ENCODE measurements at regions of chr17 and their contacts with region 1.

Region 1: GRCh38 chr17:5226940-5227878 is 7.5 kb downstream of the SCIMP start:
- DNase-seq: peak; percentile 92
- ATAC-seq: peak; percentile 67
- H3K4me3 ChIP-seq: peak overlapping the region; percentile 68
- H3K27ac ChIP-seq: peak overlapping the region; percentile 100
- H3K4me1 ChIP-seq: peaks cover 76% of the 10 kb centered on the region
- H3K27me3 ChIP-seq: no peaks in the 10 kb centered on the region
- CTCF ChIP-seq: no peak
- EP300 ChIP-seq: peak; percentile 83 to 86
- POLR2A ChIP-seq: peak; percentile 70
- RAD21 ChIP-seq: no peak

Region 2: DNA sequence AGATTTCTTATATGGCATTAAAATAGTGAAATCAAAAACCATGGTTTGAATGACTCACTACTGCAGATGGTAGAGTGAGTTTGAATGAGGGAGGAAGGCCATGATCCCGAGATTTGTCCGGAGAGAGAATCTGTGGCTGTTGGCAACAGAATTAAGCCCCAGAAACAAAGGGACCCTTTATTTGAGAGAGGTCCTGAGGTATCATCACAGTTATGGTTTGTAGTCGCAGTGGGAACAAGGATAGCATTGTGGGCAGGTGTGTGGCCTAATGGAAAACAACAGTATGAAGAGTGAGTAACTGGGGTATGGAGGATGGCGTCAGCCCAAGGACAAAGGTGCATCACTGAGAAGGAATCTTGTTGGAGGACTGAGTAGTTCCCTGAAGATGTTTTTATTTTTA is 157.5 kb before region 1 on chr17:
- CTCF ChIA-PET with region 1: no interaction called
- POLR2A ChIA-PET with region 1: no interaction called
- RAD21 ChIA-PET with region 1: no interaction called
- SMC1A ChIA-PET with region 1: no interaction called
- in situ Hi-C with region 1: no loop called
- intact Hi-C with region 1: no loop called
- DNase-seq: no peak
- ATAC-seq: no peak
- H3K4me3 ChIP-seq: no peak overlapping the region
- H3K27ac ChIP-seq: no peak overlapping the region
- H3K4me1 ChIP-seq: no peaks in the 10 kb centered on the region
- H3K27me3 ChIP-seq: no peaks in the 10 kb centered on the region; a peak in 1 of 4 replicates
- CTCF ChIP-seq: no peak
- EP300 ChIP-seq: no peak
- POLR2A ChIP-seq: no peak
- RAD21 ChIP-seq: no peak

Region 3: GRCh38 chr17:5191541-5192417 is 35.4 kb before region 1 on chr17 and contains the start of gene ZNF594:
- CTCF ChIA-PET with region 1: interaction called, 209 read pairs
- POLR2A ChIA-PET with region 1: interaction called, 7 read pairs
- RAD21 ChIA-PET with region 1: interaction called, 125 read pairs
- SMC1A ChIA-PET with region 1: interaction called, 157 read pairs
- in situ Hi-C with region 1: no loop called
- intact Hi-C with region 1: no loop called
- DNase-seq: peak; percentile 81
- ATAC-seq: peak; percentile 100
- H3K4me3 ChIP-seq: peak within 1 kb of the TSS; percentile 68
- H3K27ac ChIP-seq: peak within 1 kb of the TSS; percentile 88
- H3K4me1 ChIP-seq: peaks cover 3% of the 10 kb centered on the region; the same call in 1 of the 2 replicates
- H3K27me3 ChIP-seq: no peaks in the 10 kb centered on the region
- CTCF ChIP-seq: peak; percentile 82 to 92 (median 83)
- EP300 ChIP-seq: 0 out of 4 replicates have a peak, but pooled peaks of 1 of the 2 experiments have one; percentile 14
- POLR2A ChIP-seq: peak; percentile 97
- RAD21 ChIP-seq: peak; percentile 50
- polyA plus RNA-seq, gene ZNF594: 0.98 to 1.7 TPM

Region 4: DNA sequence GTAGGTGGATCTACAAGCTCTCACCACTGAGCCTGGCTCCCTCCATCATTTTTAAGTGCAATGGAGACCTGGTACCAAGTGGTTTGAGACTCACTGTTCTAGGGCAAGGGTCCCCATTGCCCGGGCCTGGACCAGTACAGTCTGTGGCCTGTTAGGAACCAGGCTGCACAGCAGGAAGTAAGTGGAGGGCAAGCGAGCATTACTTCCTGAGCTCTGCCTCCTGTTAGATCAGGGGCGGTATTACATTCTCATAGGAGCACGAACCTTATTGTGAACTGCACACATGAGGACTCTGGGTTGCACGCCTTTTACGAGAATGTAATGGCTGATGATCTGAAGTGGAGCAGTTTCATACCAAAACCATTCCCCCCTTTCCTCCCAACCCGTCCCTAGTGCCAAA is 28.7 kb before region 1 on chr17:
- CTCF ChIA-PET with region 1: interaction called, 209 read pairs
- POLR2A ChIA-PET with region 1: interaction called, 72 read pairs
- RAD21 ChIA-PET with region 1: interaction called, 125 read pairs
- SMC1A ChIA-PET with region 1: interaction called, 157 read pairs
- in situ Hi-C with region 1: no loop called
- intact Hi-C with region 1: loop called (anchors 1 kb)
- DNase-seq: no peak
- ATAC-seq: peak; percentile 69
- H3K4me3 ChIP-seq: no peak overlapping the region
- H3K27ac ChIP-seq: peak overlapping the region; percentile 89
- H3K4me1 ChIP-seq: peaks cover 31% of the 10 kb centered on the region
- H3K27me3 ChIP-seq: no peaks in the 10 kb centered on the region
- CTCF ChIP-seq: no peak; a peak in 1 of 6 replicates
- EP300 ChIP-seq: no peak
- POLR2A ChIP-seq: peak; percentile 27; the same call in 1 of the 2 replicates
- RAD21 ChIP-seq: no peak

Region 5: GRCh38 chr17:5203908-5204294 is 23.3 kb before region 1 on chr17:
- CTCF ChIA-PET with region 1: interaction called, 209 read pairs
- POLR2A ChIA-PET with region 1: interaction called, 72 read pairs
- RAD21 ChIA-PET with region 1: interaction called, 125 read pairs
- SMC1A ChIA-PET with region 1: interaction called, 157 read pairs
- in situ Hi-C with region 1: no loop called
- intact Hi-C with region 1: no loop called
- DNase-seq: no peak
- ATAC-seq: no peak
- H3K4me3 ChIP-seq: no peak overlapping the region
- H3K27ac ChIP-seq: no peak overlapping the region
- H3K4me1 ChIP-seq: peaks cover 26% of the 10 kb centered on the region
- H3K27me3 ChIP-seq: no peaks in the 10 kb centered on the region
- CTCF ChIP-seq: no peak
- EP300 ChIP-seq: no peak
- POLR2A ChIP-seq: no peak
- RAD21 ChIP-seq: no peak

Region 6: DNA sequence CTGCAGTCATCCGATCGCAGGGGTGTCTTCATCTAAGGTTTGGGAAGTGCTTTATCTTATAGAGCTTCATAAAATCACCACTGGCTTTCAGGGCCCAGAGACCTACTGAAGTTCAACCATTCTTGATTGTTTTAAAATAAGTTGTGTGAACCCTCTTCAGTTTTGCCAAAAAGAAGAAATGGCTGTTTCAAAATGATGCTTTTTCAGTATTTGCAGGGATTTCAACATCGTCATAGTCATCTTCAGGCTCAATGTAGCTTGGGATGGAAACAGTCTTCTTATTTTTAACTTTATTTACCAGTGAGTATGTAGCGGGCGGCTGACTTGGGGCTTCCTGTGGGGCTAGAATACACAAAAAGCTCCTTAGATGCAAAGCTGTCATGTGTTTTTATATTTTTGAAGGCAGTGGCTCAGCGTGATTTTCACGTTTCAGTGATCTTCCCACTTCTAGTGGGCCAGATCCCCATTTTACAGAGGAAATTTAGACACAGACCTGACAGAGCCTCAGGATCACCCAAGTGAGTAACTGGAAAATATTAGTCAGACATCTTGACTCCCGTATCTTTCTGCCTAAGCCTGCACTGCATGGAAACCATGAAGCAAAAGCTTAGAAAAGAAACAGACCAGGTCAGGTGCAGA is 16.5 kb before region 1 on chr17:
- CTCF ChIA-PET with region 1: interaction called, 10 read pairs
- POLR2A ChIA-PET with region 1: interaction called, 52 read pairs
- RAD21 ChIA-PET with region 1: interaction called, 49 read pairs
- SMC1A ChIA-PET with region 1: interaction called, 57 read pairs
- in situ Hi-C with region 1: no loop called
- intact Hi-C with region 1: no loop called
- DNase-seq: peak; percentile 73
- ATAC-seq: peak; percentile 70
- H3K4me3 ChIP-seq: no peak overlapping the region
- H3K27ac ChIP-seq: peak overlapping the region; percentile 88
- H3K4me1 ChIP-seq: peaks cover 53% of the 10 kb centered on the region
- H3K27me3 ChIP-seq: no peaks in the 10 kb centered on the region
- CTCF ChIP-seq: no peak
- EP300 ChIP-seq: peak in 1 of 2 experiments; percentile 63; a peak in 2 of 4 replicates
- POLR2A ChIP-seq: no peak
- RAD21 ChIP-seq: no peak

Region 7: GRCh38 chr17:6981426-6981825 is 1754.2 kb after region 1 on chr17:
- CTCF ChIA-PET with region 1: no interaction called
- POLR2A ChIA-PET with region 1: no interaction called
- RAD21 ChIA-PET with region 1: no interaction called
- SMC1A ChIA-PET with region 1: no interaction called
- in situ Hi-C with region 1: no loop called
- intact Hi-C with region 1: no loop called
- DNase-seq: no peak
- ATAC-seq: no peak
- H3K4me3 ChIP-seq: no peak overlapping the region
- H3K27ac ChIP-seq: no peak overlapping the region
- H3K4me1 ChIP-seq: no peaks in the 10 kb centered on the region
- H3K27me3 ChIP-seq: no peaks in the 10 kb centered on the region
- CTCF ChIP-seq: no peak
- EP300 ChIP-seq: no peak
- POLR2A ChIP-seq: no peak
- RAD21 ChIP-seq: no peak